GM10248 (cell line): ENCODE measurements at regions of chr16 and their contacts with region 1.

Region 1: DNA sequence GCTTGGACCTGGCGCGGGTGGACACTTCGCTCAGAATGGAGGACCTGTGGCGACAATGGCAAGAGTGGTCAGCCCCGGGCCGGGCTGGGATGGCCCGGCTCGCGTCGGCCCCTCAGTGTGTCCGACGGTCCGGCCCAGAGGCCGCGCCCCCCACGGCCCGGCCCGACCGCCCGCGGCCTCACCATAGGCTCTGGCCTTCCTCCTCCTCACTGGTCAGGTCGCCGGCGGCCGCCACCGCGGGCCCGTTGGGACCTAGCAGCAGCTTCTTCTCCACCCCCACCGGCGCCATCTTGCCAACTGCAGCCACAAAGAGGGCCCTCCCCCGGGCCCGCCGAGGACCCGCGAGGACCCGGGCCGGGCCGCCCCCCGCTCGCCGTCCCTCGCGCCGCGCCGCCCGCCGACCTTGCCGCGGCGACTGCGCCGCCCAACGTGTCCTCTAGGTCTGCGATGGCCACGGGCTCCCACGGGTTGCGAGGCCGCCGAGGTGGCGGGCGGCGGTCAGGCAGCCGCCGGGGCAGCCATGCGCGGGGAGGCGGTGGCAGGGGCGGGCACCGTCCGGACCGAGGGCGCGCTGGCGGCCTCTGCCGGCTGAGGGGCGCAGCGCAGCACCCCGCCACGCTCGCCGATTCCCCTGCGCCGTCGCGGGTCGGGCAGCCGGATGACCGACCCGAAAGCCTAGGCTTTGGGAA is at the start of gene DYNC1LI2:
- DNase-seq: peak; percentile 96
- CTCF ChIP-seq: peak; percentile 96

Region 2: GRCh38 chr16:66728117-66728787 is 23.2 kb before region 1 on chr16:
- CTCF ChIA-PET with region 1: interaction called, 46 read pairs
- POLR2A ChIA-PET with region 1: no interaction called
- DNase-seq: peak; percentile 67
- CTCF ChIP-seq: peak; percentile 58

Region 3: GRCh38 chr16:66740010-66740409 is 11.4 kb before region 1 on chr16:
- CTCF ChIA-PET with region 1: interaction called, 46 read pairs
- POLR2A ChIA-PET with region 1: no interaction called
- DNase-seq: peak; percentile 64
- CTCF ChIP-seq: no peak

Region 4: GRCh38 chr16:66774981-66775380 is 23.5 kb after region 1 on chr16:
- CTCF ChIA-PET with region 1: interaction called, 13 read pairs
- POLR2A ChIA-PET with region 1: no interaction called
- DNase-seq: no peak
- CTCF ChIP-seq: no peak

Region 5: DNA sequence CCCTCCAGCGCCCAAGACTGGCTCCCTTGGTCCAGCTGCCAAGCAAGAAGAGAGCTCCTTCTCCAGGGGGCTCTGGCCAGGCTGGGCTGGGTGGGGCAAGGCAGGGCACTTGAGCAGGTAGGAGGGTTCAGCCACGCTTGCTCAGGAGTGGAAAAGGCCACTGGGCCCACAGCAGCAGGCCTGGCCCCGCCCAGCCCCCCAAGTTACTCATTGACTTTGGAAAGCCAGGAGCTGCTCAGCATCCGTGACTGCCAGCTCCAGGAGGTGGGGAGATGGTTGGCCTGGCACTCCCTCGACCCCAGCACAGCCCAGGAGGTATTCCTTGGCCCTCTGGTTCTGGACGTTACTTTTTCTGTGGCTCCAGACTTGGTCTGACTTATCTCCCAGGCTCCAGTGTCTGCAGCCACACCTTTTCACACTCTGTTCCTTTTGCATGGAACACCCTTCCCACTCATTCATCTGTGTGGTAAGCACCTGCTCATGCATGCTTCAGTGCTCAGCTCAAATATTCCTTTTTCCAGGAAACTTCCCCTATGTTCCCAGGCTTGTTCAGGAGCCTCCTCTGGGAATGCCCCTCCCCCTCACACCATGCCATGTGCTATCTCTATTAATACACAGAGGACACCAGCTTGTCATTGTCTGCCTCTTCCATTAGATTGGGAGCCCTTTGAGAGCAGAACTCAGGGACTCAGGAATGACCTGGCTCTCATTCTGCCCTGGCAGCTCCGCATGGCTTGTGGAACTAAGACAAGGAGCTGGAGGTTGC is 167.5 kb after region 1 on chr16 and contains the start of gene CDH16:
- CTCF ChIA-PET with region 1: no interaction called
- POLR2A ChIA-PET with region 1: no interaction called
- DNase-seq: no peak
- CTCF ChIP-seq: no peak